ENCODE measurements at regions of chr3 and their contacts with region 1.

Region 1: DNA sequence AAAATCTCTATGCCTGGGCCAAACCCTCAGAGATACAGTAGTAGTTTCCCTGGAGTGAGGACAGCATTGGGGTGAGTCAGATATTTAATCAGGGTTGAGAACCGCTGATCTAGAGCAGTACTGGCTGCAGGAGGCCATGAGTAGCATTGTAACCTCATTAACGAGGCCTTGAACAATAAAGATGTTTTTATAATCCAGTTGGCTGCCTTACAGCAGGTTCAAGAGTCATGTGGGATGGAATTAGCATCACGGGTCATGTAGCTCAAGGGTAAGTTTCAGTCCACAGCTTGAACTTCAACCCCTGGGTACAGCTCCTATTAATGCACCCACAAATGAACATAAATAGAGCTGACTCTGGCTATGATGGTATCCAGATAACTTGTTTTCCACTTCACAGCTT is 5.1 kb downstream of the HPS3 start:
- DNase-seq: no peak
- H3K4me3 Mint-ChIP-seq: no peak overlapping the region
- H3K27ac Mint-ChIP-seq: no peak overlapping the region
- H3K4me1 Mint-ChIP-seq: peaks cover 27% of the 10 kb centered on the region
- H3K27me3 Mint-ChIP-seq: no peaks in the 10 kb centered on the region

Region 2: DNA sequence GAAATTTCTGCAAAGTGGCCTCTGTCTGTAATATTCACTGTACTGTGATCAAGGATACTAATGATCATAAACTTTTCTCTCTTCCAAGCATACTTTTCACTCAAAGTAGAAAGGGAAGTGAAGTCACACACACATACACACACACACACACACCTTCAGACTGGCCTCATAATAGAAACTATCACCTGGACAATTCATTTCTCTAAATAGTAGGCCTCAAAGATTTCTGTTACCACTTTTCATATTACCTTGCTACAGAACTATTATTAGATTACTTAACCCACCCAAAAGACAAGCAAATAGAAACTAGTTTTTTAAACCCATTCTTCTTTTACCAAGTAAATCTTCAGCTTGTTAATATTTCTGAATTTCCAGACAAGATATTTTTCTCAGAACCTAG is 294.8 kb before region 1 on chr3:
- CTCF ChIA-PET with region 1: no interaction called
- intact Hi-C with region 1: no loop called
- DNase-seq: no peak
- H3K4me3 Mint-ChIP-seq: no peak overlapping the region
- H3K27ac Mint-ChIP-seq: no peak overlapping the region
- H3K4me1 Mint-ChIP-seq: no peaks in the 10 kb centered on the region
- H3K27me3 Mint-ChIP-seq: peaks cover 6% of the 10 kb centered on the region

Region 3: GRCh38 chr3:149080701-149081093 is 53.9 kb before region 1 on chr3:
- CTCF ChIA-PET with region 1: no interaction called
- intact Hi-C with region 1: no loop called
- DNase-seq: no peak
- H3K4me3 Mint-ChIP-seq: no peak overlapping the region
- H3K27ac Mint-ChIP-seq: no peak overlapping the region
- H3K4me1 Mint-ChIP-seq: peaks cover 12% of the 10 kb centered on the region
- H3K27me3 Mint-ChIP-seq: no peaks in the 10 kb centered on the region

Region 4: GRCh38 chr3:149151843-149152242 is 17.3 kb after region 1 on chr3:
- CTCF ChIA-PET with region 1: interaction called, 3 read pairs
- intact Hi-C with region 1: loop called (anchors 2 kb)
- DNase-seq: no peak
- H3K4me3 Mint-ChIP-seq: no peak overlapping the region
- H3K27ac Mint-ChIP-seq: no peak overlapping the region
- H3K4me1 Mint-ChIP-seq: peaks cover 5% of the 10 kb centered on the region
- H3K27me3 Mint-ChIP-seq: no peaks in the 10 kb centered on the region

Region 5: GRCh38 chr3:149163066-149163465 is 28.5 kb after region 1 on chr3:
- CTCF ChIA-PET with region 1: no interaction called
- intact Hi-C with region 1: no loop called
- DNase-seq: no peak
- H3K4me3 Mint-ChIP-seq: no peak overlapping the region
- H3K27ac Mint-ChIP-seq: no peak overlapping the region
- H3K4me1 Mint-ChIP-seq: no peaks in the 10 kb centered on the region
- H3K27me3 Mint-ChIP-seq: no peaks in the 10 kb centered on the region